Heart right ventricle (tissue), 16 donors: ENCODE measurements at regions of chr4 and their contacts with region 1.

Region 1: GRCh38 chr4:150078637-150079581 is 664 bp downstream of the DCLK2 start:
- DNase-seq: peak; percentile 62 to 73
- ATAC-seq: peak; percentile 58 to 79 (median 72)
- H3K4me3 ChIP-seq: peak overlapping the region; percentile 69 to 93 (median 74)
- H3K27ac ChIP-seq: peak overlapping the region; percentile 81 to 96 (median 90)
- H3K4me1 ChIP-seq: peaks cover 0 to 49% (median 24%) of the 10 kb centered on the region in 9 donors
- H3K27me3 ChIP-seq: peaks cover 0 to 40% (median 0%) of the 10 kb centered on the region in 7 donors
- CTCF ChIP-seq: peak in 3 of 9 donors; percentile 31 to 43 (median 34)

Region 2: GRCh38 chr4:149531861-149532260 is 547.0 kb before region 1 on chr4:
- intact Hi-C with region 1: no loop called
- DNase-seq: no peak
- ATAC-seq: no peak
- H3K4me3 ChIP-seq: no peak overlapping the region
- H3K27ac ChIP-seq: no peak overlapping the region
- H3K4me1 ChIP-seq: no peaks in the 10 kb centered on the region
- H3K27me3 ChIP-seq: no peaks in the 10 kb centered on the region
- CTCF ChIP-seq: no peak

Region 3: DNA sequence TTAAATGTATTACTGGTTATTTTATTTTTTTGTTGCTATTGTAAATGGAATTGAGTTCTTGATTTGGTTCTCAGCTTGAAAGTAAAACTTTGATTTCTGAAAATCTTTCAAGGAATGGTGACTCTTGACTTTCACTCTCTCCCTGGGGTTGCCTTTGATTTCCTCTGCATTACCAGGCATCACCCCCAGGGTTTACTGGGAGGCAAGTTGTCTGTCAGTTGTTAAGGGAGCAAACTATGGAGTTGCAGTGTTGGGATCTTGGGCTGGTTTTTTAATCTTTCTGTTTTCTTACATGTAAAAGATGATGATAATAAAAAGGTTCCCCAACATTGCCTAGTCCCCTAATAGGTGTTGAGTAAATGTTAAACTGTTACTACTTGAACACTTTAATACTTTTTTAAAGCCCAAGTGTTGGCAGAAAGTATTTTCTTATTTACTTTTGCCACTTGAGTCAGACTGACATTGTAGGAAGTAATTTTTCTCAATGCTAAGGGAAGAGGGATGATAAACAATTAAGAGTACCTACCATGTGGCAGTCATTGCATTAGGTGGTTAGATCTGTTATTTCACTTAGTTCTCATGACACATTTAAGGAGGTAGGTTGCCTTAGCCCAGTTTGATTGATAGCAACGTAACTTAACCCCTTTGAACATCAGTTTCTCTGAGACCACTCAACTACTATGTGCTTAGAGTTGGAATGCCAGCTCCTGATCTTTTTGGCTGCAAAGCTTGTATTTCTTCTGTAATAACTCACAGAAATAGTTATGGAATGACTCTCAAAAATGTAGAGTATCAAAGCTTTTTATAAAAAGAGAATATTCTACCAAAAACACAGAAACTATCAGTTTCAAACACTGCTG is 66.4 kb after region 1 on chr4:
- intact Hi-C with region 1: no loop called
- DNase-seq: no peak
- ATAC-seq: no peak
- H3K4me3 ChIP-seq: no peak overlapping the region
- H3K27ac ChIP-seq: no peak overlapping the region
- H3K4me1 ChIP-seq: peaks cover 0 to 21% (median 12%) of the 10 kb centered on the region in 9 donors
- H3K27me3 ChIP-seq: no peaks in the 10 kb centered on the region
- CTCF ChIP-seq: peak in 1 of 9 donors; percentile 5

Region 4: DNA sequence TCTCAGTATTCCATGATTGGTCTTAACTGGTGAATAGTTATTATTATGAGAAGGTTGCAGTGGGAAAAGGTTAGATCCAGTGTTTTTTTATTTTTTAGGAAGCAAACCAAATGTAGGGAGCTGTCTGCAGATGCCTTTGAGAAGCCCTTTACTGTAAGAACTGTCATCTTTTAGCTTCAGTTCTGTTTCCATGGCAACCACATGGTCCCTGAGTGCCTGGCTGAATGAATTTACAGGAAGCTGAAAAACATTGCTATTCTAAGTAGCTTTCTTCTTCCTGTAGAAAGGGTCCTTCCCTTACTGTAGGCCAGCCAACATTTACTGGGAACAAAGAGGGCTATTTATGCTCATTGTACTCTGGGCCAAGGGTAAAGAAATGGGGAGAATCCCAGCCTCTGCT is 102.6 kb after region 1 on chr4:
- intact Hi-C with region 1: loop called in 4 of 10 experiments (anchors 5 to 10 kb)
- DNase-seq: peak in 1 of 2 donors; percentile 62
- ATAC-seq: peak; percentile 69 to 92 (median 82)
- H3K4me3 ChIP-seq: no peak overlapping the region
- H3K27ac ChIP-seq: peak overlapping the region in 5 of 10 donors; percentile 7 to 65 (median 43)
- H3K4me1 ChIP-seq: peaks cover 3 to 47% (median 42%) of the 10 kb centered on the region in 9 donors
- H3K27me3 ChIP-seq: no peaks in the 10 kb centered on the region
- CTCF ChIP-seq: no peak

Region 5: GRCh38 chr4:150209140-150209829 is 130.4 kb after region 1 on chr4:
- intact Hi-C with region 1: loop called in 7 of 10 experiments (anchors 2 to 10 kb)
- DNase-seq: peak; percentile 60 to 73
- ATAC-seq: peak; percentile 70 to 86 (median 80)
- H3K4me3 ChIP-seq: no peak overlapping the region
- H3K27ac ChIP-seq: peak overlapping the region in 1 of 10 donors; percentile 21
- H3K4me1 ChIP-seq: peaks cover 0 to 66% (median 32%) of the 10 kb centered on the region in 9 donors
- H3K27me3 ChIP-seq: no peaks in the 10 kb centered on the region
- CTCF ChIP-seq: peak; percentile 23 to 76 (median 67)

Region 6: GRCh38 chr4:150217192-150217591 is 138.3 kb after region 1 on chr4:
- intact Hi-C with region 1: loop called in 1 of 10 experiments (anchors 10 kb)
- DNase-seq: no peak
- ATAC-seq: peak in 7 of 8 donors; percentile 34 to 77 (median 71)
- H3K4me3 ChIP-seq: no peak overlapping the region
- H3K27ac ChIP-seq: no peak overlapping the region
- H3K4me1 ChIP-seq: peaks cover 0 to 26% (median 9%) of the 10 kb centered on the region in 9 donors
- H3K27me3 ChIP-seq: no peaks in the 10 kb centered on the region
- CTCF ChIP-seq: peak in 7 of 9 donors; percentile 11 to 52 (median 36)

Region 7: DNA sequence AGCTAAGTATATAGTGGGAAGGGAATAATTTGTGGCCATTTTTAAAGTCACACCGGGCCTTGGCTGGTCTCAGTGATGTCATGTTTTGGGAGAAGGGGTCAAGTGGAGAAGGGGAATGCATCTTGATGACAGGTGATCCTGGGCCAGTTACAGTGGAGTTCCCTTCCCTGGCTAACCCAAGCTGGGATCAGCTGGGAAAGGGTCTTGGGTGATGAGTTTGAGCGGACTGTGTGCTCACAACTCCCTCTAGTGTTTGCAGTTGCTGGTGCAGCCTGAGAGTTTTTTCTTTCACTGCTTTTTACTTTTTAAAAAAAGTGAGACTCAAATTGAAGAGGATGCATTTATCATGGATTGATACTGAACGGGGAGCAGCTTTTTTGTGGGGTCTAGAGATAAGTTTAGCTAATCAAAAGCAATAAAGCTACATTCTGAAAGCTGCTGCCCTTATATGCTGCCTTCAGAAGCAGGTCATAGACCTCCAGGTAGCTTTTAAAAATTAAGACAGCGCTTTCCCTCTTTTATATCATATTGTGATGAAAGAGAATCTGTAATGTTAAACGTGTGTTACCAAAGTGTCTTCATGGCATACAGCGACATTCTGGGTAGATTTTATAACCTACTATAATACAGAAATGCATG is 164.0 kb after region 1 on chr4:
- intact Hi-C with region 1: no loop called
- DNase-seq: peak in 1 of 2 donors; percentile 25
- ATAC-seq: peak in 6 of 8 donors; percentile 11 to 63 (median 50)
- H3K4me3 ChIP-seq: no peak overlapping the region
- H3K27ac ChIP-seq: no peak overlapping the region
- H3K4me1 ChIP-seq: no peaks in the 10 kb centered on the region
- H3K27me3 ChIP-seq: no peaks in the 10 kb centered on the region
- CTCF ChIP-seq: peak; percentile 82 to 94 (median 90)